Natural killer cell (primary cell): ENCODE measurements at regions of chr16 and their contacts with region 1.

Region 1: GRCh38 chr16:29694384-29695195 is 15.6 kb downstream of the QPRT start:
- DNase-seq: no peak
- ATAC-seq: no peak
- H3K4me3 ChIP-seq: no peak overlapping the region
- H3K4me3 Mint-ChIP-seq: no peak overlapping the region
- H3K27ac ChIP-seq: no peak overlapping the region
- H3K27ac Mint-ChIP-seq: no peak overlapping the region
- H3K4me1 ChIP-seq: peaks cover 8% of the 10 kb centered on the region
- H3K4me1 Mint-ChIP-seq: peaks cover 4 to 15% of the 10 kb centered on the region in 2 donors
- H3K27me3 ChIP-seq: no peaks in the 10 kb centered on the region
- H3K27me3 Mint-ChIP-seq: peaks cover 0 to 3% of the 10 kb centered on the region in 2 donors
- CTCF ChIP-seq: no peak

Region 2: GRCh38 chr16:29678691-29679267 is 15.8 kb before region 1 on chr16 and contains the start of gene QPRT:
- intact Hi-C with region 1: no loop called
- DNase-seq: no peak
- ATAC-seq: peak in 1 of 3 donors; percentile 11
- H3K4me3 ChIP-seq: no peak within 1 kb of the TSS
- H3K4me3 Mint-ChIP-seq: peak within 1 kb of the TSS; percentile 76
- H3K27ac ChIP-seq: no peak within 1 kb of the TSS
- H3K27ac Mint-ChIP-seq: peak within 1 kb of the TSS; percentile 53 to 82
- H3K4me1 ChIP-seq: peaks cover 27% of the 10 kb centered on the region
- H3K4me1 Mint-ChIP-seq: peaks cover 10 to 24% of the 10 kb centered on the region in 2 donors
- H3K27me3 ChIP-seq: no peaks in the 10 kb centered on the region
- H3K27me3 Mint-ChIP-seq: no peaks in the 10 kb centered on the region
- CTCF ChIP-seq: no peak
- total RNA-seq, gene QPRT: 2.5 to 6.3 (median 4.7) TPM

Region 3: DNA sequence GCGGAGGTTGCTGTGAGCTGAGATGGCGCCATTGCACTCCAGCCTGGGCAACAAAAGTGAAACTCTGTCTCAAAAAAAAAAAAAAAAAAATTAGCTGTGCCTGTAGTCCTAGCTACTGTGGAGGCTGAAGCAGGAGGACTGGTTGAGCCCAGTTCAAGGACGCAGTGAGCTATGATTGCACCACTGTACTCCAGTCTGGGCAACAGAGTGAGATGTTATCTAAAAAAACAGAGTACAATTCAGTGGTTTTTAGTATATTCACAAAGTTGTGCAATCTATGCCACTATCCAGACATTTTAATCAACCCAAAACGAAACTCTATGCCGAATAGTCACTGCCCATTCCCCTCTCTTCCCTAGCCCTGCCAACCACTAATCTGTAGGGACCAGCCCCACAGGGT is 26.1 kb after region 1 on chr16:
- intact Hi-C with region 1: no loop called
- DNase-seq: no peak
- ATAC-seq: no peak
- H3K4me3 ChIP-seq: no peak overlapping the region
- H3K4me3 Mint-ChIP-seq: no peak overlapping the region
- H3K27ac ChIP-seq: no peak overlapping the region
- H3K27ac Mint-ChIP-seq: peak overlapping the region in 1 of 2 donors; percentile 62
- H3K4me1 ChIP-seq: peaks cover 5% of the 10 kb centered on the region
- H3K4me1 Mint-ChIP-seq: peaks cover 9% of the 10 kb centered on the region in 2 donors
- H3K27me3 ChIP-seq: no peaks in the 10 kb centered on the region
- H3K27me3 Mint-ChIP-seq: no peaks in the 10 kb centered on the region
- CTCF ChIP-seq: no peak

Region 4: DNA sequence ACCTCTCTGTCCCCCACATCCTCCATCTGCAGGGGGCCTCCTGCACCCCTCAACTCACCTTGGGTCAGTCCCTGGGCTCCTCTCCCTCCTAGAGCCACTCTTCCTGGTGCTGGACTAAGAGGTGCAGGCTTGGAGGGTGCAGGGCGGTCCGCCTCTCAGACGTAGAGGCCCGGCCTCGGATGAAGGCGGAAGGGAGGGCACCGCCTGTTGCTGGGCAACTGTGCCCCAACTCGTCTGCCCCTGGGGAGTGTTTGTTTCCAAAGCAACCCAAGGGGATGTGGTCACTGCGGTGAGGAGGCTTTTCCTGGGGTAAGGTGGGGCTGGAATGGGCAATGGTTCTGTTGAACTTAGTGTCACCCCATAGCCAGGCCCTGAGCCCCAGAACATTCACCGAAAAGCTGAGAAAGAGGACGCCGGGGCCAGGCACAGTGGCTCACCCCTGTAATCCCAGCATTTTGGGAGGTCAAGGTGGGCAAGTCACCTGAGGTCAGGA is 51.3 kb after region 1 on chr16 and contains the start of gene C16orf54:
- intact Hi-C with region 1: no loop called
- DNase-seq: peak; percentile 88 to 97
- ATAC-seq: peak; percentile 82 to 95 (median 88)
- H3K4me3 ChIP-seq: peak within 1 kb of the TSS; percentile 100
- H3K4me3 Mint-ChIP-seq: peak within 1 kb of the TSS; percentile 100
- H3K27ac ChIP-seq: peak within 1 kb of the TSS; percentile 100
- H3K27ac Mint-ChIP-seq: peak within 1 kb of the TSS; percentile 99
- H3K4me1 ChIP-seq: peaks cover 74% of the 10 kb centered on the region
- H3K4me1 Mint-ChIP-seq: peaks cover 43 to 71% of the 10 kb centered on the region in 2 donors
- H3K27me3 ChIP-seq: no peaks in the 10 kb centered on the region
- H3K27me3 Mint-ChIP-seq: no peaks in the 10 kb centered on the region
- CTCF ChIP-seq: no peak
- total RNA-seq, gene C16orf54: 100.0 to 172 (median 146) TPM

Region 5: GRCh38 chr16:29848420-29849297 is 154.1 kb after region 1 on chr16:
- intact Hi-C with region 1: loop called (anchors 2 kb)
- DNase-seq: peak; percentile 75 to 89
- ATAC-seq: peak; percentile 85 to 97 (median 90)
- H3K4me3 ChIP-seq: no peak overlapping the region
- H3K4me3 Mint-ChIP-seq: no peak overlapping the region
- H3K27ac ChIP-seq: no peak overlapping the region
- H3K27ac Mint-ChIP-seq: peak overlapping the region; percentile 36 to 75
- H3K4me1 ChIP-seq: peaks cover 5% of the 10 kb centered on the region
- H3K4me1 Mint-ChIP-seq: peaks cover 0 to 6% of the 10 kb centered on the region in 2 donors
- H3K27me3 ChIP-seq: no peaks in the 10 kb centered on the region
- H3K27me3 Mint-ChIP-seq: no peaks in the 10 kb centered on the region
- CTCF ChIP-seq: peak; percentile 84

Region 6: DNA sequence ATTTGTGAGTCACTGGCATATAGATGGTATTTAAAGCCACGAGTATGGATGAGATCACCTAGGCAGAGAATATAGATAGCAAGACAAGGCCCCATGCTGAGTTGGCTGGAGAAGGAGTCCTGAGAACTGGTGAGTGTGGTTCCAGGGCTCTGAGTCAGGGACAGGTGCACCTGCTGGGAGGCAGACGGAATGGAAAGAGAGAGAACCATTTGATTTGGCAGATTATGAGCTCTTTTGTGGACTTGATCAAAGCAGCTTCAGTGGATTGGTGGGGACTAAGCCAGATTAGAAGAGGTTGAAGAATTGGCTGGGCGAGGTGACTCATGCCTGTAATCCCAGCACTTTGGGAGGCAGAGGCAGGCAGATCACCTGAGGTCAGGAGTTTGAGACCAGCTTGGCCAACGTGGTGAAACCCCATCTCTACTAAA is 324.2 kb after region 1 on chr16:
- intact Hi-C with region 1: loop called (anchors 1 kb)
- DNase-seq: no peak
- ATAC-seq: no peak
- H3K4me3 ChIP-seq: no peak overlapping the region
- H3K4me3 Mint-ChIP-seq: no peak overlapping the region
- H3K27ac ChIP-seq: no peak overlapping the region
- H3K27ac Mint-ChIP-seq: no peak overlapping the region
- H3K4me1 ChIP-seq: peaks cover 12% of the 10 kb centered on the region
- H3K4me1 Mint-ChIP-seq: peaks cover 8 to 13% of the 10 kb centered on the region in 2 donors
- H3K27me3 ChIP-seq: no peaks in the 10 kb centered on the region
- H3K27me3 Mint-ChIP-seq: peaks cover 0 to 14% of the 10 kb centered on the region in 2 donors
- CTCF ChIP-seq: no peak